Caco-2 (cell line): ENCODE measurements at regions of chr7 and their contacts with region 1.

Region 1: DNA sequence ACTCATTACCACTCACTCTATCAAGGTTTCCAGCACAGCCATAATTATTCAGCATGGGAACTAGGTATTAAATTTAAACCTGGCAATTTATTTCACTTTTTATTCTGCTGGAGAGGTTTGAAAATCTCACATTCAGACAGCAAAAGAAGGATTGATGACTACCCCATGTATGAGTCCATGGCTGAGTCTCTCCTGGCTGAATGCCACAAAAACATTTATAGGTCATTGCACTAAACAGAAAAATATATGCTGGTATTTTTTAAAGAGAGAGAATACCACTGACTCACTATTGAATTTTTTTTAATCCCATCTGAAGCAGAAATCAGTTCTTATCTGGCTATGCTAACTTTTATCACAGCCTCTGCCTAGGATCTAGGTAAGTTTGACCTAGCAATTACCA is 336.3 kb downstream of the PPP1R3A start:
- DNase-seq: no peak
- H3K4me3 ChIP-seq: no peak overlapping the region
- H3K4me3 Mint-ChIP-seq: no peak overlapping the region
- H3K27ac Mint-ChIP-seq: no peak overlapping the region
- H3K4me1 ChIP-seq: no peaks in the 10 kb centered on the region
- H3K4me1 Mint-ChIP-seq: no peaks in the 10 kb centered on the region
- H3K27me3 ChIP-seq: no peaks in the 10 kb centered on the region
- H3K27me3 Mint-ChIP-seq: no peaks in the 10 kb centered on the region
- CTCF ChIP-seq: no peak

Region 2: DNA sequence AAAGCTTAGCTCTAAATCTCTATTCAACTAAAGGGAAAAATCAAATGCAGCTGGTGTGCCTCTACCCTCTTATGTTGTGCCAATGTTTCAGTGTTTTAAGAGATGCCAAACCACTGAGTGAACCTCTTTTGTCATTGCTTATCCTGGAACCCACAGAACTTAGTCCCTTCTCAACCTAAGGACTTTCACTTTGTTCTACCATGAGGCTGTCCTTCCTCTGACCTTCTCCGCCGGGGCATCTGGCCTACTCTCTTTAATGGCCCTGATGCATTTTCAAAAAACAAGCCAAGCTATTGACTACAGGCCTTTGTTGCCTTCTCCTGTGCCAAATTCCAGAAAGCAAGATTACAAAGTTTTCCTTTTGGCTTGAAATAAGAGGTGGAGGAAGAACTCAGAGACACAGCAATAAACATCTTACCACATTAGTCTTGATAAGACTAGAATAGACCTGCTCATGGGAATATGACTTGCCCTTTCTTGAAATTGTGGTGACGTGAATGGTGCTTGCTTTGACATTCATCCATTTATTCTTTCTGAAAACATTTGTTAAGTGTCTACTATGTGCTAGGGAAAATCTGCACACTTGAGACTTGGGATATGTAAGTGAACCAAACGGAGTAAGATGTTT is 210.9 kb before region 1 on chr7:
- CTCF ChIA-PET with region 1: no interaction called
- POLR2A ChIA-PET with region 1: no interaction called
- intact Hi-C with region 1: no loop called
- DNase-seq: no peak
- H3K4me3 ChIP-seq: no peak overlapping the region
- H3K4me3 Mint-ChIP-seq: no peak overlapping the region
- H3K27ac Mint-ChIP-seq: no peak overlapping the region
- H3K4me1 ChIP-seq: no peaks in the 10 kb centered on the region
- H3K4me1 Mint-ChIP-seq: peaks cover 6% of the 10 kb centered on the region
- H3K27me3 ChIP-seq: no peaks in the 10 kb centered on the region
- H3K27me3 Mint-ChIP-seq: peaks cover 4% of the 10 kb centered on the region
- CTCF ChIP-seq: no peak

Region 3: DNA sequence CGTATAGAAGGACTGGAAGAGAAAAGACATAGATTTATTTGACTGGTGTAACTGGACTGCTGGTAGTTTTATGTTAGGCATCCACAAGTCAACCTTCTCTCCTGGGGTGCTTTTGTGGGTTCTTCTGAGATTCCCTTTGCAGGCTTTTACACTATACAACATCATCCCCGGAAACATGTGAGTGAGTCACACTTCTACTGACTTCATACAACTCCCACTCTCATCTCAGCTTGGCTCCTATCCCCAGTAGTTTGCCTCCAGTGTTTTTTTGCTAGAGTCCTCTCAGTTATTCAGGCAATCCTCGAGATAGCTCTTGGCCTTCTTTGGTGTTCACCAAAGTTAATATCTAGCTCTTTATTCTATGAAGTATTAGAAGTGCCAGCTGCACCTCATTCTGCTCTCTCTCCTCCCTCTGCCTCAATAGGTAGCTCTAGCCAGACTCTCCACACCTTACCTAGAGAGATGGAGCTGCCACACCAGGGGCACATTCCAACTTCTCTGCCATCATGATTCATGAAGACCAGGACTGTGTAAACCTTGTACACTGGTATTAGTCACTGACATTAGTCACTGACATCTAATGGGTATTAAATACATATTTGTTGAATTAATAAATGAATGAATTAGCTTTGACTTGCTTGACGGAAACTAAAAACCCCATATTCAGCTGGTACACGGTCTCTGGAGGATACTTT is 54.4 kb after region 1 on chr7:
- CTCF ChIA-PET with region 1: no interaction called
- POLR2A ChIA-PET with region 1: no interaction called
- intact Hi-C with region 1: loop called (anchors 10 kb)
- DNase-seq: no peak
- H3K4me3 ChIP-seq: no peak overlapping the region
- H3K4me3 Mint-ChIP-seq: no peak overlapping the region
- H3K27ac Mint-ChIP-seq: no peak overlapping the region
- H3K4me1 ChIP-seq: no peaks in the 10 kb centered on the region
- H3K4me1 Mint-ChIP-seq: no peaks in the 10 kb centered on the region
- H3K27me3 ChIP-seq: no peaks in the 10 kb centered on the region
- H3K27me3 Mint-ChIP-seq: no peaks in the 10 kb centered on the region
- CTCF ChIP-seq: no peak